Upper lobe of right lung (tissue), 1 donor: ENCODE measurements at regions of chr11 and their contacts with region 1.

Region 1: GRCh38 chr11:34174412-34175041 is 69.1 kb downstream of the NAT10 start:
- DNase-seq: peak; percentile 92
- ATAC-seq: peak; percentile 98
- H3K4me3 ChIP-seq: peak overlapping the region; percentile 25
- H3K27ac ChIP-seq: no peak overlapping the region
- H3K4me1 ChIP-seq: peaks cover 7% of the 10 kb centered on the region
- H3K27me3 ChIP-seq: no peaks in the 10 kb centered on the region
- CTCF ChIP-seq: peak; percentile 88

Region 2: DNA sequence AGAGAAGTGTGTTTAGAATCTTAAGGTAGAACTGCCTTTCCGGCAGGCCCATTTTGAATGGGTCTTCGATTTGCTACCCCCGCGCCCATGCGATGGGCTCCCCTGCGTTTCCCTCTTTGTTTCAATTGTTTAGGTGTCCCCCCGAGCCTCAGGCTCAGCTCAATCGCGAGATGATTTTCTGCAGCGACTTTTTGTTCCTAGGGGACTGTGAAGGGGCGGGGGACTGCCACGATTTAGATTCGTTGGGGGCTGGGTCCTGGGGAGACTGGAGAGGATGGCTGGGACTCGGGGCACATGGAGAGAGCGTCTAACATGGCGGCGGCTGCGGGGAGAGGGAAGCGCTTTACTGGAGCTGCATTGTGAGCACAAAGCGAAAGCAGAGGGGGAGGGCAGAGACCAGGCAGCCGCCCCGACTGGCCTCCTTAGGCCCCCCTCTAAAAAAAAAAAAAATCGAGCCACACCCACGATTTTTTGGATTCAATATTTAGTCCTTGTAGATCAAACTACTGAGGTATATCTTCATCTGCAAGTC is 121.3 kb before region 1 on chr11:
- intact Hi-C with region 1: no loop called
- DNase-seq: peak; percentile 87
- ATAC-seq: peak; percentile 58
- H3K4me3 ChIP-seq: peak overlapping the region; percentile 98
- H3K27ac ChIP-seq: peak overlapping the region; percentile 90
- H3K4me1 ChIP-seq: peaks cover 43% of the 10 kb centered on the region
- H3K27me3 ChIP-seq: no peaks in the 10 kb centered on the region
- CTCF ChIP-seq: no peak

Region 3: GRCh38 chr11:34313099-34313517 is 138.6 kb after region 1 on chr11:
- intact Hi-C with region 1: no loop called
- DNase-seq: no peak
- ATAC-seq: no peak
- H3K4me3 ChIP-seq: no peak overlapping the region
- H3K27ac ChIP-seq: no peak overlapping the region
- H3K4me1 ChIP-seq: peaks cover 19% of the 10 kb centered on the region
- H3K27me3 ChIP-seq: no peaks in the 10 kb centered on the region
- CTCF ChIP-seq: no peak

Region 4: GRCh38 chr11:34357701-34358257 is 183.3 kb after region 1 on chr11 and contains the start of gene ABTB2:
- intact Hi-C with region 1: loop called (anchors 2 kb)
- DNase-seq: peak; percentile 99
- ATAC-seq: peak; percentile 96
- H3K4me3 ChIP-seq: peak within 1 kb of the TSS; percentile 64
- H3K27ac ChIP-seq: peak within 1 kb of the TSS; percentile 52
- H3K4me1 ChIP-seq: peaks cover 30% of the 10 kb centered on the region
- H3K27me3 ChIP-seq: peaks cover 14% of the 10 kb centered on the region
- CTCF ChIP-seq: no peak
- total RNA-seq, gene ABTB2: 3.2 TPM

Region 5: DNA sequence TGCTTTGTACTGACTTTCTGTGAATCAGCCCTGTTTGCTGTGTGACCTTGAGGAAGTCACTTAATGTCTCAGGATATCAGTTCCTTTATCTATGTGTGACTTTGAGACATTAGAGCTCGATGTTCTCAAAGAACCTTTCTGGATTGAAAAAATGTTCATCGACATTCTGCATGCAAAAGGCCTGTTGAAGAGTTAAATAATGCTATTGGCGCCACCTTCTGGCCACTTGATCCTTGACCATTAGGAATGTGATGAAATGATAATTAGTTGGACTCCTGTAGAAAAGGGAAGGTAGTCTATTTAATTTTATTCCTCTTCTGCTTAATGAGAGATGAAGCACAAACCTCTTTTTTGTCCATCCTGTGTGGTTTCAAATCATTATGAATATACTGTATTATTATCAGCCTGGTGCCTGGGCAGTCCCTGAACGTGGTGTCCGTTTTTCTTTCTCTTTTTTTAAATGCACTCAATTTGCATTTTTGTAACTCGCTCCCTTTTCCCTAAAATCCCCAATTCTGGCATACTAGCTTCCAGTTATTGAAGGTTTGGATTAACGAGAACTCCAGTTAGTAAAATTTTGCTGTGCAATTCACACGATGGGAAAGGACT is 318.4 kb after region 1 on chr11:
- intact Hi-C with region 1: loop called (anchors 10 kb)
- DNase-seq: no peak
- ATAC-seq: peak; percentile 58
- H3K4me3 ChIP-seq: no peak overlapping the region
- H3K27ac ChIP-seq: no peak overlapping the region
- H3K4me1 ChIP-seq: no peaks in the 10 kb centered on the region
- H3K27me3 ChIP-seq: no peaks in the 10 kb centered on the region
- CTCF ChIP-seq: peak; percentile 74